Cardiac septum (tissue), 1 donor: ENCODE measurements at regions of chr12 and their contacts with region 1.

Region 1: GRCh38 chr12:122871851-122872780 is 23.8 kb downstream of the VPS37B start:
- DNase-seq: peak; percentile 88

Region 2: GRCh38 chr12:122767691-122768090 is 104.4 kb before region 1 on chr12:
- intact Hi-C with region 1: no loop called
- DNase-seq: no peak

Region 3: GRCh38 chr12:122888232-122888867 is 16.2 kb after region 1 on chr12:
- intact Hi-C with region 1: loop called (anchors 2 kb)
- DNase-seq: peak; percentile 81

Region 4: DNA sequence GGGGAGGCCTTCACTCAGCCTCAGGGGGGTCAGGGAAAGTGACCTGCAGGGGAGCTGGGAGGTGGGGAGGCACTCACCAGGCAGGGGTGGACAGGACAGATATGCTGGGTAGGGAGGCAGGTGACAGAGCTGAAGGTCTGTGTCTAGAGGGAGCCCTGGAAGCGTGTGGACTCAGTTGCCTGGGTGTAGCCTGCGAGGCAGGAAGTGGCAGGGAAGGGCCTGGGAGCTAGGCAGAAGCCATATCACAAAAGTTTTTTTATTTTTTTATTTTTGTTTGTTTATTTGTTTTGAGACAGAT is 147.7 kb after region 1 on chr12:
- intact Hi-C with region 1: no loop called
- DNase-seq: no peak

Region 5: DNA sequence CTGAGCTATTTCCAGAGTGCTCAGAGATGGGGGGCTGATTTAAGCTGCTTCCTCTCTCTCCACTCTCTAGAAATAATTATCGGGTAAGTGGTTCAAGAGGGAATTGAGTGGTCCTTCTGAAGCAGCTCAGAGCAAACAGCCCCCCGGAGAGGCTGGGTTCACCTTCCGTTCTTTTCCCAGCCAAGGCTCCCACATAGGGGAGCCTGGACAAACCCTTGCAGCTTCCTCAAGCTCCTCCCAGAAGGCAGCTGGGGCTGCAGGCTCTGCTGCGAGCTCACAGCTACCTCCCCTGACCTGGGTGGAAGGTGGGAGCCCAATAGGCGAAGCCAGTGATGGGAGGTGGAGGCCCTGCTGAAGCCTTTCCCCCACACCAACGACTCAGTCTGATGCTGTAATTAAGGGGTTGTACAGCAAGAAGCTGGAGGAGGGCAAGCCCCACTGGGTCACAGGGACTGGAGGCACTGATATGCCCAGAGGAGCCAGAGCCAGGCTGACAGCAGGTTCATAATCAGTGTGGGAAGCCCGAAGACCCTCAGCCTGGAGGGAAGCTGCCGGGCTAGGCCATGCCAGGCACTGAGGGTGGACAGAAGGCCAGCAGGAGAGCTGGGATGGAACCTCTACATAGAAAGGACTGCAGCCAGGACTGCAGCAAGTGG is 160.7 kb after region 1 on chr12:
- intact Hi-C with region 1: no loop called
- DNase-seq: no peak